BJ (cell line): ENCODE measurements at regions of chr16 and their contacts with region 1.

Region 1: DNA sequence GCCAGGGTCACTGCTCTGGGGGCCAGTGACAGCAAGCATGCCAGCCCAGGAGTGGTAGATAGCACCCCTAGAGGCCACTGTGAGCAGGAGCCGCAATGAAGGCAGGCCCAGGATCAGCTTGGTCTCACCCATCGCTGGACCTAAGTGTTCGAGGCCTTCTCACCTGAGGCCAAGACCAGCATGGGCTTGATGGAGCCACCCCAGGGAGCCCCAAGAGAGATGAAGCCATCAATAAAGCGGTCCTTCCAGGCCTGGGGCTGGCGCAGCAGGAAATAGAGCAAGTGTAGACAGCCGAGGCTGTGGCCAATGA is 1.8 kb downstream of the LCAT start:
- DNase-seq: no peak
- H3K4me3 ChIP-seq: no peak overlapping the region
- H3K27me3 ChIP-seq: no peaks in the 10 kb centered on the region
- CTCF ChIP-seq: peak; percentile 73

Region 2: DNA sequence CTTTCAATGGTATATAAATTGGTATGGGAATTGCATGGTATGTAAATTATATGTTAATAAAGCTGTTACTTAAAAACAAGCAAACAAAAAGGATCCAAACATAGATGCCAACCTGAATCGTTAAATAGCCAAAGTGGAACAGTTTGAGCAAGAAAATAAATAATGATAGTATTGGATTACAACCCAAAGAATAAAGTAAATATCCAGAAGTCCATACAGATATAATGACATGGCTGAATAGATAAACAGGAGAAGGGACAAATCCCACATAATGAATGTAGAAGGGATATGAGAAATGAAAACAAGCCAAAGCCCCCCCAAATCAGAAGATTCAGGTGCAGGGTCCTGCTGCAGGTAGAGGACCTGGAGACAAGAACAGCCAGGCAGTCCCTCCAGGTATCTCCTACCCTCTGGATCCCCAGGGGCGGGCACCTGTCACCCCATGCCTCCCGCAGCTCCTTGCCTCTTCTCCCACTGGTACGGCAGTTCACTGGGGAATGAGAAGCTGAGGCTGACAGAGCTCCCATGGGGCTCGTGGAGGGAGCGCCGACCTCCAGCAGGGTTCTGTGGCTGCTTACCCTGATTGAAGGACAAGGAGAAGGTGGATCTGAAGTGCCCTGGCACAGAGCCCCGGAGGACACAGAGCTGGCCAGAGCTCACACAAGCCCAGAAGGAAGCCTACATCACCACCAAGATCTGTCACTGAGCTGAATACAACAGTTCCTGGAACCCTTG is 11.7 kb after region 1 on chr16:
- CTCF ChIA-PET with region 1: interaction called, 16 read pairs
- POLR2A ChIA-PET with region 1: no interaction called
- DNase-seq: no peak
- H3K4me3 ChIP-seq: no peak overlapping the region
- H3K27me3 ChIP-seq: no peaks in the 10 kb centered on the region
- CTCF ChIP-seq: no peak

Region 3: DNA sequence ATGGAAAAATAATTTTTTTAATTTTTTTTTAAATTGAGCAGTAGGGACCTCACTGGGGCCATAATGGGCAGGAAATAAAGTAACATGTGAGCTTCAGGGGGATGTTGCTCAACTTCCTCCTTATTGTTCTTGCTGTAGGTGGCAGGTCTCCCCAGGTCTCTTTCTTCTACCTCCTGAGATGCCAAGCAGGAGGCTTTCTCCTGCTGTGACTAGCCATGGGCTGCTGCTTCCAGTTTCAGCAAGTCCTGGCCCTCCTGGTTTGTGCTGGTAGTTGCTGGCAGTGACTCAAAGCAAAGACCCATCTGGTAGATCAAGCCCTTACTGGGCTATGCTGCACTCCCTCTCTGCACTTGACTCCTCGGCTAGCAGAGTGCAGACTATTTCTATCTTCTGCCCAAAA is 71.3 kb after region 1 on chr16:
- CTCF ChIA-PET with region 1: no interaction called
- POLR2A ChIA-PET with region 1: no interaction called
- DNase-seq: no peak
- H3K4me3 ChIP-seq: no peak overlapping the region
- H3K27me3 ChIP-seq: peaks cover 4% of the 10 kb centered on the region
- CTCF ChIP-seq: no peak

Region 4: GRCh38 chr16:68147438-68147837 is 205.3 kb after region 1 on chr16:
- CTCF ChIA-PET with region 1: no interaction called
- POLR2A ChIA-PET with region 1: no interaction called
- DNase-seq: no peak
- H3K4me3 ChIP-seq: no peak overlapping the region
- H3K27me3 ChIP-seq: no peaks in the 10 kb centered on the region
- CTCF ChIP-seq: no peak